A673 (cell line): ENCODE measurements at regions of chrX and their contacts with region 1.

Region 1: GRCh38 chrX:97315939-97316338 is 432.2 kb downstream of the RPA4 start:
- DNase-seq: peak; percentile 57
- H3K4me3 ChIP-seq: no peak overlapping the region
- H3K27ac ChIP-seq: no peak overlapping the region
- H3K4me1 ChIP-seq: no peaks in the 10 kb centered on the region
- H3K27me3 ChIP-seq: no peaks in the 10 kb centered on the region
- CTCF ChIP-seq: peak; percentile 72

Region 2: GRCh38 chrX:97026406-97026805 is 289.5 kb before region 1 on chrX:
- CTCF ChIA-PET with region 1: no interaction called
- POLR2A ChIA-PET with region 1: no interaction called
- intact Hi-C with region 1: loop called (anchors 10 kb)
- DNase-seq: peak; percentile 48
- H3K4me3 ChIP-seq: no peak overlapping the region
- H3K27ac ChIP-seq: no peak overlapping the region
- H3K4me1 ChIP-seq: peaks cover 3% of the 10 kb centered on the region
- H3K27me3 ChIP-seq: no peaks in the 10 kb centered on the region
- CTCF ChIP-seq: peak; percentile 43

Region 3: DNA sequence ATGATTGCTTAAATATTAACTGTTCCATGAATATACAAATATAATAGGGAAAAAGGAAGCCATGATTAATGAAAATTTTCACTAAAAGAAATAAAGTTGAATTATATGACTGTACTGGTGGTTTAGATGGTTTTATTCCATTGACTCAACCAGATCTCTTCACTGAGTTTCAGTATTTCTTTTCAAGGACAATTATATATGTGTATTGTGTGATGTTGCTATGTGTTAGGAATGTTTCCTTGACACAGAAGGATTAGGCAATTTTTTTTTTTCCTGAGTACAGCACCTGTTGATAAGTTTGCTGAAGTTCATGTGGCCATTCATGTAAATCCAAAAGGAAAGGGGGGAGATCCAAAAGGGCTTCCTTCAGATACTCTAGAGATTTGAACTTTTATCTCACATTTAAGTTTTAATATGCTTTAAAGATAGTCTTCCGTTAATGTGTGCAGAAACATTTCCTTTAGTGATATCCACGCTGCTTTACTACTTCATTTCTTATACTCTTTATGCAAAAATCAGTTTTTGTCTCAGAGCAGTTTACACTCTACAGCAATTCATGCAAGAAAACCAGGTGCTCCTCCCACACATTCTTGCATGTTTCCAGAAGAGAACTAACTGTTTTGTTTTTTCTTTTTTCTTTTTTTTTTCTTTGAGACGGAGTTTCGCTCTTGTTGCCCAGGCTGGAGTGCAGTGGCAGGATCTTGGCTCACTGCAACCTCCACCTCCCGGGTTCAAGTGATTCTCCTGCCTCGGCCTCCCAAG is 183.1 kb before region 1 on chrX:
- CTCF ChIA-PET with region 1: no interaction called
- POLR2A ChIA-PET with region 1: no interaction called
- intact Hi-C with region 1: loop called (anchors 10 kb)
- DNase-seq: no peak
- H3K4me3 ChIP-seq: no peak overlapping the region
- H3K27ac ChIP-seq: no peak overlapping the region
- H3K4me1 ChIP-seq: peaks cover 18% of the 10 kb centered on the region
- H3K27me3 ChIP-seq: peaks cover 21% of the 10 kb centered on the region
- CTCF ChIP-seq: no peak

Region 4: DNA sequence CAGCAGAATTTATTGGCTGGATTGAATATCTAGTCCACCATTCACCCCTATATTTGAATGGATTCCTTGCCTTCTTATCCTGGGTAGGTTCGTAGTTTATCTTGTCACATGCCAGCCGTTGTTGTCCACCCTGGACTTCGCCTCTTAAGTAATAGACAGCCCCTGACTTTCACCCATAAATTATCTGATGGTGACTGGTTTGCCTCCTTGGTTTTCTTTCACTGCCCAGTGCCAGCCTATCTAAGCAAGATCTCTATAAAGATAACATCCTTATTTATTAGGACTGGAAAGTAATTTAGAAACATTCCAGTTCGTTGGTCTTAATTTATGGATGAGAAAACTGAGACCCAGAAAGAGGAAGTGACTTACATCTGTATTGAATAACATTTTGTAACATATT is 21.9 kb before region 1 on chrX:
- CTCF ChIA-PET with region 1: no interaction called
- POLR2A ChIA-PET with region 1: no interaction called
- intact Hi-C with region 1: no loop called
- DNase-seq: no peak
- H3K4me3 ChIP-seq: no peak overlapping the region
- H3K27ac ChIP-seq: no peak overlapping the region
- H3K4me1 ChIP-seq: no peaks in the 10 kb centered on the region
- H3K27me3 ChIP-seq: no peaks in the 10 kb centered on the region
- CTCF ChIP-seq: no peak